PC-9 (cell line): ENCODE measurements at regions of chr4 and their contacts with region 1.

Region 1: DNA sequence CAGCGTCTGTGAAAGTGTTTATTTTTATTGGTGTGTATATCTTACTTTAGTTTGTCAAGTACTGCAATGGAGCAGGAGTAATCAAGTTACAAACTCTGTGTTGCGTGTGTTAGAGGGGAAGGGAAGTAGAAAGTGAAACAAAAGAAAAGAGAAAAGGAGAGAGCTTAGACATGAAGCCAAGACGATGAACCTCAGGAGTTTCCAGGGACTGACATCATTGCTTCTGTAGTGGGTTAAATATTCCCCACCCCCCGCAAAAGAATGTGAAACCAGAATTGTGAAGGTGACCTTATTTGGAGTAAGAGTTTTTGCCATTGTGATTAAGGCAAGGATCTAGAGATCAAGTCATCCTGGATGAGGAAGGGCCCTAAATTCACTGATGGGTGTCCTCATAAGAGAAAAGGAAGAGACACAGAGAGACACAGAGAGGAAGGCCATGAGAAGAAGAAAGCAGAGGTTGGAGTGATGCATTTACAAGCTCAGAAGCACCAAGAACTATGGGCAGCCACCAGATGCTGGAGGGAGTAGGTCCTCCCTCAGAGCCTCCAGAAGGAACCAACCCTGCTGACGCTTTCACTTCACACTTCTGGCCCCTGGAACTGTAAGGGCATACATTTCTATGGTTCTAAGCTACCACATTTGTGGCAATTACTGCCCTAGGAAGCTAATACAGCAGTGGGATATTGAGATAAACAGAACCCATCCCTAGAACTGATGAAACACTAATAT is 173.6 kb upstream of the SFRP2 start:
- DNase-seq: no peak
- H3K4me3 ChIP-seq: no peak overlapping the region
- H3K27ac ChIP-seq: no peak overlapping the region
- H3K4me1 ChIP-seq: no peaks in the 10 kb centered on the region
- H3K27me3 ChIP-seq: no peaks in the 10 kb centered on the region
- CTCF ChIP-seq: no peak

Region 2: DNA sequence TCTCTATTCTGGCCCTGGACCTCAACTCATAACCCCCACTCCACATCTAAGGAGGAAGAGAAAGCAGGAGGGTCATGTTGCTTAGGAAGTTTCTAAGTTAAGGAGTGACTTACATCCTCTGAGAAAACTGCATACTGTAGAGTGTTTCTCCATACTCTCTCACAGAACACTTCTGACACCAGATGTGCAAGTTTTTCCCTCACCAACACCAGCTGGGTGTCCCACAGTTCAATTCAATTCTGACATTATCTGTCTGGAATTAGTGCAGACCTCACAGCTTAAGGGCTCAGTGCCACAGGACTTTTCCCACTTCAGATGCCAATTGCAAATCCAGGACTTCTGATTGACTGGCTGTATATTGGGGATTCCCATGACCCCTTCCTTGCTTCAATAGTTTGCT is 84.6 kb before region 1 on chr4:
- CTCF ChIA-PET with region 1: no interaction called
- POLR2A ChIA-PET with region 1: no interaction called
- intact Hi-C with region 1: no loop called
- DNase-seq: no peak
- H3K4me3 ChIP-seq: no peak overlapping the region
- H3K27ac ChIP-seq: no peak overlapping the region
- H3K4me1 ChIP-seq: no peaks in the 10 kb centered on the region
- H3K27me3 ChIP-seq: no peaks in the 10 kb centered on the region
- CTCF ChIP-seq: no peak

Region 3: DNA sequence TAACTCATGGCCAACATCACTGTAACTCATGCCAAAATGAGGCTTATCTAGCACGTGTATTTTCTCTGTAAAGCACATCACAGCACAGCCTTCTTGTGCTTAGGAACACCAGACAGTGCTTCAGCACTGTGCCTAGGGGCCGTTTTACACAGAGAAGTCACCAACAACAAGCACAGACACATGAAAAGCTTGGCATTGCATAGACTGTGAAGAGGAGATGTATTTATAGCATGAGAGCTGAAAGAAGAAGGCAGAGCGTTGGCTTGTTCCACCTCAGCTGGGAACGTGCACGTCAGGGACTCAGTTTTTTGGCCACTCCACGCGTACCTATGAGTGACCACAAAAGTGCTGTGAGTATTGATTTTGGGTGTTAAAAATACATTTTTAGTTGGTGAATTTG is 57.2 kb before region 1 on chr4:
- CTCF ChIA-PET with region 1: no interaction called
- POLR2A ChIA-PET with region 1: no interaction called
- intact Hi-C with region 1: loop called (anchors 2 kb)
- DNase-seq: no peak
- H3K4me3 ChIP-seq: no peak overlapping the region
- H3K27ac ChIP-seq: no peak overlapping the region
- H3K4me1 ChIP-seq: no peaks in the 10 kb centered on the region
- H3K27me3 ChIP-seq: no peaks in the 10 kb centered on the region
- CTCF ChIP-seq: no peak